GM12878 (cell line): ENCODE measurements at regions of chr11 and their contacts with region 1.

Region 1: GRCh38 chr11:28086569-28086968 is 21.4 kb downstream of the KIF18A start:
- DNase-seq: no peak
- ATAC-seq: no peak
- H3K4me3 ChIP-seq: no peak overlapping the region
- H3K27ac ChIP-seq: no peak overlapping the region
- H3K4me1 ChIP-seq: no peaks in the 10 kb centered on the region
- H3K27me3 ChIP-seq: no peaks in the 10 kb centered on the region
- CTCF ChIP-seq: no peak
- EP300 ChIP-seq: no peak
- POLR2A ChIP-seq: no peak
- RAD21 ChIP-seq: no peak

Region 2: GRCh38 chr11:28072321-28072720 is 14.2 kb before region 1 on chr11:
- CTCF ChIA-PET with region 1: interaction called, 6 read pairs
- POLR2A ChIA-PET with region 1: no interaction called
- RAD21 ChIA-PET with region 1: no interaction called
- SMC1A ChIA-PET with region 1: interaction called, 12 read pairs
- in situ Hi-C with region 1: no loop called
- intact Hi-C with region 1: no loop called
- DNase-seq: no peak
- ATAC-seq: no peak
- H3K4me3 ChIP-seq: no peak overlapping the region
- H3K27ac ChIP-seq: no peak overlapping the region
- H3K4me1 ChIP-seq: no peaks in the 10 kb centered on the region
- H3K27me3 ChIP-seq: no peaks in the 10 kb centered on the region
- CTCF ChIP-seq: no peak
- EP300 ChIP-seq: no peak
- POLR2A ChIP-seq: no peak
- RAD21 ChIP-seq: no peak